SK-N-SH (cell line): ENCODE measurements at regions of chr11 and their contacts with region 1.

Region 1: GRCh38 chr11:65850831-65851811 is 6.9 kb downstream of the CFL1 start:
- DNase-seq: peak; percentile 76
- H3K4me3 ChIP-seq: no peak overlapping the region
- H3K27ac ChIP-seq: no peak overlapping the region
- H3K4me1 ChIP-seq: peaks cover 0 to 16% of the 10 kb centered on the region in 2 experiments; a peak in 2 of 4 replicates
- H3K27me3 ChIP-seq: no peaks in the 10 kb centered on the region
- CTCF ChIP-seq: peak; percentile 61
- EP300 ChIP-seq: no peak
- RAD21 ChIP-seq: no peak

Region 2: GRCh38 chr11:65833297-65834030 is 17.7 kb before region 1 on chr11 and contains the start of gene SNX32:
- CTCF ChIA-PET with region 1: interaction called, 9 read pairs
- POLR2A ChIA-PET with region 1: interaction called, 14 read pairs
- DNase-seq: peak; percentile 99
- H3K4me3 ChIP-seq: peak within 1 kb of the TSS; percentile 28 to 73
- H3K27ac ChIP-seq: peak within 1 kb of the TSS in 1 of 2 experiments; percentile 64; a peak in 1 of 4 replicates
- H3K4me1 ChIP-seq: peaks cover 0 to 13% of the 10 kb centered on the region in 2 experiments; a peak in 1 of 4 replicates
- H3K27me3 ChIP-seq: no peaks in the 10 kb centered on the region
- CTCF ChIP-seq: no peak
- EP300 ChIP-seq: no peak
- RAD21 ChIP-seq: no peak
- polyA plus RNA-seq, gene SNX32: 0.81 and 1.0 TPM in 2 replicates